ENCODE measurements at regions of chr3 and their contacts with region 1.

Region 1: GRCh38 chr3:45995236-45996192 is at the start of gene FYCO1:
- DNase-seq: peak; percentile 85 to 92
- ATAC-seq: peak; percentile 81 to 92 (median 86)
- H3K4me3 ChIP-seq: peak within 1 kb of the TSS; percentile 85
- H3K4me3 Mint-ChIP-seq: peak within 1 kb of the TSS; percentile 87
- H3K27ac ChIP-seq: peak within 1 kb of the TSS; percentile 95
- H3K27ac Mint-ChIP-seq: peak within 1 kb of the TSS; percentile 81 to 85
- H3K4me1 ChIP-seq: peaks cover 47% of the 10 kb centered on the region
- H3K4me1 Mint-ChIP-seq: peaks cover 38 to 46% of the 10 kb centered on the region in 2 donors
- H3K27me3 ChIP-seq: no peaks in the 10 kb centered on the region
- H3K27me3 Mint-ChIP-seq: peaks cover 7 to 16% of the 10 kb centered on the region in 2 donors
- CTCF ChIP-seq: no peak
- total RNA-seq, gene FYCO1: 23.0 to 28.4 (median 27.5) TPM

Region 2: DNA sequence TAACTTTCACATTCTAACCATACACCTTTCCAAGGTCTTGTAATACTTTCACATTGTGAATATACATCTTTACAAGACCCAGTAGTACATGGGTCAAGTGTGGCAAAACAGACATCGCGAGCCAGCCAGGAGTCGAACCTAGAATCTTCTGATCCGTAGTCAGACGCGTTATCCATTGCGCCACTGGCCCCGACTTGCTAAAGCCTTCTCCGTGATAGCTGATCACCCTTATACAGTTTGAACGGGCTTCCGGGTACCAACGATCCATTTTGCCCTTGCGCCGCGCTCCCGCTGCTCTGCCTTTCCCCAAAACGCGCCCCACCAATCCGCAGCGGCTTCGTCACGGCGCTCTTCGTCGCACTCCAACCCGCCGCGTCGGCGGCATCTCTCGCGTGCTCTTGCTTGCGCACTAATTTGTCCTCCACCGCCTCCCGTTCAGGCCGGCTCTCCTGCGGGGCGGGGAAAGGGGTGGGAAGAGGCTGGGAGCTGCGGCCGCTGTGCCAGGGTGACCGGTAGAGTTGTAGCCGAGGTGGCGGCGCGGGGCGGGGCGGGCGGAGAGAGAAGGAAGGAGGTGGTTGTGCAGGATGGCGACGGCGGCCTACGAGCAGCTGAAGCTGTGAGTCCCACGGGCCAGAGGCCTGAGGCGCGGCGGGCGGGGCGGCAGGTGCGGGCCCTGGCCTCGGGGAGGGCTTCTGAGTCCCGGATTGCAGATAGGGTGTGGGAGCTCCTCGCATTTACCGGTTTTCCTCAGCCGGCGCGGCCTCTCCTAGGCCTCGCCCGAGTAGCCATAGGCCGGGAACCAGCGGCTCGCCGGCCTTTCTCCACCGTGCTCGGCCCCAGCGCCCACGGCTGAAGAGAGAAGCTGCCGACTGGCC is 306.4 kb before region 1 on chr3 and contains the start of gene SACM1L:
- intact Hi-C with region 1: loop called (anchors 10 kb)
- DNase-seq: peak; percentile 97 to 99
- ATAC-seq: peak; percentile 84 to 94 (median 87)
- H3K4me3 ChIP-seq: peak within 1 kb of the TSS; percentile 63
- H3K4me3 Mint-ChIP-seq: peak within 1 kb of the TSS; percentile 99
- H3K27ac ChIP-seq: peak within 1 kb of the TSS; percentile 79
- H3K27ac Mint-ChIP-seq: peak within 1 kb of the TSS; percentile 97 to 100
- H3K4me1 ChIP-seq: peaks cover 36% of the 10 kb centered on the region
- H3K4me1 Mint-ChIP-seq: peaks cover 55 to 56% of the 10 kb centered on the region in 2 donors
- H3K27me3 ChIP-seq: no peaks in the 10 kb centered on the region
- H3K27me3 Mint-ChIP-seq: peaks cover 4 to 7% of the 10 kb centered on the region in 2 donors
- CTCF ChIP-seq: no peak
- total RNA-seq, gene SACM1L: 93.2 to 110 (median 93.9) TPM

Region 3: GRCh38 chr3:45942051-45942825 is 53.3 kb before region 1 on chr3:
- intact Hi-C with region 1: no loop called
- DNase-seq: peak in 1 of 2 donors; percentile 22
- ATAC-seq: no peak
- H3K4me3 ChIP-seq: no peak overlapping the region
- H3K4me3 Mint-ChIP-seq: no peak overlapping the region
- H3K27ac ChIP-seq: no peak overlapping the region
- H3K27ac Mint-ChIP-seq: peak overlapping the region in 1 of 2 donors; percentile 17
- H3K4me1 ChIP-seq: peaks cover 66% of the 10 kb centered on the region
- H3K4me1 Mint-ChIP-seq: peaks cover 30 to 49% of the 10 kb centered on the region in 2 donors
- H3K27me3 ChIP-seq: no peaks in the 10 kb centered on the region
- H3K27me3 Mint-ChIP-seq: no peaks in the 10 kb centered on the region
- CTCF ChIP-seq: no peak

Region 4: GRCh38 chr3:45958321-45958791 is 37.2 kb before region 1 on chr3:
- intact Hi-C with region 1: loop called (anchors 5 kb)
- DNase-seq: peak in 1 of 2 donors; percentile 45
- ATAC-seq: peak; percentile 60 to 66 (median 63)
- H3K4me3 ChIP-seq: no peak overlapping the region
- H3K4me3 Mint-ChIP-seq: peak overlapping the region; percentile 4
- H3K27ac ChIP-seq: peak overlapping the region; percentile 46
- H3K27ac Mint-ChIP-seq: peak overlapping the region; percentile 61 to 84
- H3K4me1 ChIP-seq: peaks cover 55% of the 10 kb centered on the region
- H3K4me1 Mint-ChIP-seq: peaks cover 21 to 24% of the 10 kb centered on the region in 2 donors
- H3K27me3 ChIP-seq: no peaks in the 10 kb centered on the region
- H3K27me3 Mint-ChIP-seq: no peaks in the 10 kb centered on the region
- CTCF ChIP-seq: no peak

Region 5: GRCh38 chr3:45976191-45977091 is 19.1 kb before region 1 on chr3:
- intact Hi-C with region 1: loop called (anchors 2 kb)
- DNase-seq: peak in 1 of 2 donors; percentile 73
- ATAC-seq: peak; percentile 68 to 80 (median 77)
- H3K4me3 ChIP-seq: no peak overlapping the region
- H3K4me3 Mint-ChIP-seq: peak overlapping the region; percentile 38
- H3K27ac ChIP-seq: peak overlapping the region; percentile 53
- H3K27ac Mint-ChIP-seq: peak overlapping the region; percentile 53 to 88
- H3K4me1 ChIP-seq: peaks cover 78% of the 10 kb centered on the region
- H3K4me1 Mint-ChIP-seq: peaks cover 39 to 47% of the 10 kb centered on the region in 2 donors
- H3K27me3 ChIP-seq: no peaks in the 10 kb centered on the region
- H3K27me3 Mint-ChIP-seq: no peaks in the 10 kb centered on the region
- CTCF ChIP-seq: no peak

Region 6: GRCh38 chr3:46013316-46014094 is 18.0 kb after region 1 on chr3:
- intact Hi-C with region 1: loop called (anchors 2 kb)
- DNase-seq: peak in 1 of 2 donors; percentile 18
- ATAC-seq: peak; percentile 29 to 91 (median 49)
- H3K4me3 ChIP-seq: no peak overlapping the region
- H3K4me3 Mint-ChIP-seq: no peak overlapping the region
- H3K27ac ChIP-seq: no peak overlapping the region
- H3K27ac Mint-ChIP-seq: no peak overlapping the region
- H3K4me1 ChIP-seq: peaks cover 34% of the 10 kb centered on the region
- H3K4me1 Mint-ChIP-seq: peaks cover 24 to 37% of the 10 kb centered on the region in 2 donors
- H3K27me3 ChIP-seq: peaks cover 12% of the 10 kb centered on the region
- H3K27me3 Mint-ChIP-seq: peaks cover 44 to 86% of the 10 kb centered on the region in 2 donors
- CTCF ChIP-seq: no peak

Region 7: GRCh38 chr3:46078712-46079400 is 83.3 kb after region 1 on chr3:
- intact Hi-C with region 1: loop called (anchors 5 kb)
- DNase-seq: peak; percentile 78 to 97
- ATAC-seq: peak; percentile 97 to 100 (median 100)
- H3K4me3 ChIP-seq: no peak overlapping the region
- H3K4me3 Mint-ChIP-seq: no peak overlapping the region
- H3K27ac ChIP-seq: no peak overlapping the region
- H3K27ac Mint-ChIP-seq: peak overlapping the region in 1 of 2 donors; percentile 5
- H3K4me1 ChIP-seq: peaks cover 3% of the 10 kb centered on the region
- H3K4me1 Mint-ChIP-seq: peaks cover 10 to 12% of the 10 kb centered on the region in 2 donors
- H3K27me3 ChIP-seq: no peaks in the 10 kb centered on the region
- H3K27me3 Mint-ChIP-seq: peaks cover 0 to 2% of the 10 kb centered on the region in 2 donors
- CTCF ChIP-seq: peak; percentile 100

Measured in natural killer cell (primary cell).